ENCODE measurements at regions of chr12 and their contacts with region 1.

Region 1: DNA sequence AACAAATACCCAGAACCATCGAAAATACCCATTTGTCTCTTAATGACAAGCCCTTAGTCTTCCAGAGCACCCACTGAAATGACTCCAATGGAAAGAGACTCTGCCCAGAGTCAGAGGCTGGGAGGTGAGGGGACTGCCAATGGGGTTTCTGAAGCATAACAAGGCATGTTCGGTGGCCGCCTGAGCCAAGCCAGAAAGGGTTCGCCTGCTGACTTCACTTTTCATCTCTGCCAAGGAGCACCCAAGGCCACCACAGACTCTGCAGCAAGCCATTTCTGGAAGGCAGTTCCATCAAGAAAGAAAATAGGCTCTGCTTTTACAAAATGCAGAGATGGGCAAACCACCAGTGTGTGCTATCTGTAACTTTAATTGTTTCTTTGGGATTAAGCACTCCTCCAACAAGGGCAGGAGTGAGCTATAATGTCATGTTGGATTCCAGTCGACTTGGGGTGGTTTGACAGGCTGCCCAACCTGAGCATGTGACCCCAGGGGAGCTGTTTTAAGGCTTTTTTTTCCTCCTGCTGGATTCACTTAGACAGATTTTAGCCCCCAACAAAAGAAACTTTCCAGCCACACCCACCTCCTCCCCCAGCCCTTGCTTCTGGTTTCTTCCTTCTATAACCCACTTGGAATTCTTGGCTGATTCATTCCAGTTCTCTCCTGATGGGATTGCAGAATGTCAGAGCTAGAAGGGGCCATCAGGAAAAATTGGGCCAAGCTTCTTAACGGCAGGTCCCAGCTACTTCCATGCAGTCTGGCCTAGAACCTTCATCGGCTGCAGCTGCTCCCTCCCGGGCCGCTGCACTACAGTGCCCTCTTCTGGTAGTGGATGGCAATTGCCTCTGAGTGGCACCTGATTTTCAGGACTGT is 24.1 kb downstream of the CKAP4 start:
- DNase-seq: peak; percentile 66 to 75 (median 74)
- ATAC-seq: peak; percentile 87
- H3K4me3 ChIP-seq: no peak overlapping the region
- H3K4me1 ChIP-seq: no peaks in the 10 kb centered on the region
- CTCF ChIP-seq: peak; percentile 98

Region 2: DNA sequence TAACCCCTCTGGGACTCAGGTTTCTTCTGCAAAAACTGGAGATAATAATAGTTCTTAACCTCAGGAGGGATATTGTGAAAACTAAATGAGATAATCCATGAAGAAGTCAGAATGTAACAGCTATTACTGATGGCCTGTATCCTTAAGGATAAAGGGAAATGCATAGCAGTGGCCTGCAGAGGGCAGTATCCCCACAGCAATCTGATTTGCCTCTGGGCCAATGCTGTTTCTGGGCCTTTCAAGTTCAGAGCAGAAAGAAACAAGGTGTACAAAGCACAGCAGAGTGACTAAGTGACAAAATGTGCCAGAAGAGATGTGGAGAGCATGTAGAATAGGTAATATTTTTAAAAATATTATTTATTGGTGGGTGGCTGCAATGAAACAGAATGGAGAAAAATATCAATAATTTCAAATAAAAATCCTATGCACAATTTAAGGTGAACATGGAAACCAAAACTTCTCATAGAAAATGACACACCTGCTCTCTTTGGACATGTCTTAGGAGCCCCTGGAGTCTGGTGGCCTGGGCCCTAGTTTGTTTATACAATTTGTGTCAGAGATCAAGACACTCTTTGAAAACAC is 803.0 kb before region 1 on chr12:
- intact Hi-C with region 1: loop called in 1 of 2 experiments (anchors 2 kb)
- DNase-seq: peak in 2 of 3 donors; percentile 72 to 80
- ATAC-seq: peak; percentile 91
- H3K4me3 ChIP-seq: no peak overlapping the region
- H3K4me1 ChIP-seq: no peaks in the 10 kb centered on the region
- CTCF ChIP-seq: peak; percentile 74

Region 3: DNA sequence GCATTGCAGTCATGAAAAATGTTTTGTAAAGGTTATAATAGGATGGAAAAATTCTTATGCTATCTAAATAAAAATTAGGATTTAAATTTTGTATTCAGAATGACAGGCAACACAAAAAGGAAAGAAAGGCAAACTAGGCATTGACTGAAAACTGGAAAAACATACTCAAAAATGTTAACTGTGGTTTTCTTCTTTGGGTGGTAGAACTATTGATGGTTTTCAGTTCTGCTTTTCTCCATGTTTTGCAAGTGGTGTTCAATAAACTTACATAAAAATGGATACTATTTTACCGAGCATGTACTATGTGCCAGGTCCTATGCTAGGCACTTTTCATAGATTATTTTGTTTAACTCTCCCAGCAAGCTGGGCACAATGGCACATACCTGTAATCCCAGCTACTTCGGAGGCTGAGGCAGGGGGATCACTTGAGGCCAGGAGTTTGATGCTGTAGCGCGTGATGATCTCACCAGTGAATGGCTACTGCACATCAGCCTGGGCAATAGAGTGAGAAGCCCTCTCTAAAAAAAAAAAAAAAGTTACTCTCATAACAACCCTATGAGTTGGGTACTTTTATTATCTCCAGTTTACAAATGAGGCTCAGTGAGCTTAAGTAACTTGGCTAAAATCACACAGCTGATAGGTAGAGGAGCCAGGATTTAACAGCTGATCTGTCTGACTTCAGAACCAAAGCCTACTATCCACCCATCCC is 52.5 kb after region 1 on chr12:
- intact Hi-C with region 1: loop called in 1 of 2 experiments (anchors 10 kb)
- DNase-seq: no peak
- ATAC-seq: no peak
- H3K4me3 ChIP-seq: no peak overlapping the region
- H3K4me1 ChIP-seq: peaks cover 15% of the 10 kb centered on the region
- CTCF ChIP-seq: no peak

Region 4: GRCh38 chr12:106282457-106283097 is 58.9 kb after region 1 on chr12:
- intact Hi-C with region 1: loop called (anchors 2 to 10 kb)
- DNase-seq: peak in 2 of 3 donors; percentile 55 to 61
- ATAC-seq: peak; percentile 92
- H3K4me3 ChIP-seq: no peak overlapping the region
- H3K4me1 ChIP-seq: no peaks in the 10 kb centered on the region
- CTCF ChIP-seq: no peak

Region 5: DNA sequence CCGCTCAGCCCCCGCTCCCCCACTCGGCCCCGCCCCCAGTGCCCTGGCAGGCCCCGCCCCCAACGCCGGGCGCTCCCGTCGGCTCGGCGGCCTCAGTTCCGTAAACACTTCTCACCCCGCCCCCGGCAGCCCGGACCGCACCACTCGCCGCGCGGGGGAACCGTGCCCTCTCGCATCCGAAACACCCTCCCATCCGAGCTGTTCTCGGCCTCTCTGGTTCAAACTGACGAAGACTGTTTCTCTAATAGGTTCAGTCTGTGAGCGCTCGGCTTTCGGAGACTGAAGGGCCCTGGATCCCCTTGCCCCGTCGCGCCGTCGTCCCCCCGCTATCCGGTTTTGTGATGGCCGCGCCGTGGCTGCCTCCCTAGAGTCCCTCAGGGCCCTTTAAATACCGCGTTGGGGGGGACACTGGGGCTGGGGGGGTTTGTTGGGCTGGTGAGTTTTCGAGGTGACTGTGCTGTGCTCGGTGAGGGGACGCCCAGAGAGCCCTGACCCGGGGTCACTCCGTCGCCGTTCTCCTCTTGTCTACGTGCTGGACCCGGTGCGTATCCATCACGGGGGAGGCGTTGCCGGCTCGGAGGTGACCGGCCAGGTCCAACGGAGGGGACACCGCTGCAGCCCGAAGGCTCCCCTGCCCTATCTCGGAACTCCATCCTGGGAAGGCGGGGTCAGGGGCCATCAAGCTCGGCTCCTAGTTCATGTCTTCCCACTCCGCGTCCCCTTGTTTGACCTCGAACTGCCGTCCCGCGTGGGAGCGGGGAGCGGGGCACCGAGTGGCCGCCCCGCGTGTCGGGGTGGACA is 78.9 kb after region 1 on chr12 and contains the start of gene TCP11L2:
- intact Hi-C with region 1: no loop called
- DNase-seq: peak; percentile 92 to 94 (median 93)
- ATAC-seq: peak; percentile 90
- H3K4me3 ChIP-seq: peak within 1 kb of the TSS; percentile 92
- H3K4me1 ChIP-seq: peaks cover 15% of the 10 kb centered on the region
- CTCF ChIP-seq: no peak
- total RNA-seq, gene TCP11L2: 32.1 to 54.5 (median 44.8) TPM

Measured in mucosa of descending colon (tissue), 3 donors.